ENCODE measurements at regions of chr21 and their contacts with region 1.

Region 1: GRCh38 chr21:33588485-33589335 is at the start of gene DONSON:
- DNase-seq: peak; percentile 93
- ATAC-seq: peak; percentile 92
- H3K4me3 Mint-ChIP-seq: peak within 1 kb of the TSS; percentile 91
- H3K27ac Mint-ChIP-seq: peak within 1 kb of the TSS; percentile 87
- H3K4me1 Mint-ChIP-seq: peaks cover 19% of the 10 kb centered on the region
- H3K27me3 Mint-ChIP-seq: no peaks in the 10 kb centered on the region
- total RNA-seq, gene DONSON: 39.5 to 41.8 TPM

Region 2: DNA sequence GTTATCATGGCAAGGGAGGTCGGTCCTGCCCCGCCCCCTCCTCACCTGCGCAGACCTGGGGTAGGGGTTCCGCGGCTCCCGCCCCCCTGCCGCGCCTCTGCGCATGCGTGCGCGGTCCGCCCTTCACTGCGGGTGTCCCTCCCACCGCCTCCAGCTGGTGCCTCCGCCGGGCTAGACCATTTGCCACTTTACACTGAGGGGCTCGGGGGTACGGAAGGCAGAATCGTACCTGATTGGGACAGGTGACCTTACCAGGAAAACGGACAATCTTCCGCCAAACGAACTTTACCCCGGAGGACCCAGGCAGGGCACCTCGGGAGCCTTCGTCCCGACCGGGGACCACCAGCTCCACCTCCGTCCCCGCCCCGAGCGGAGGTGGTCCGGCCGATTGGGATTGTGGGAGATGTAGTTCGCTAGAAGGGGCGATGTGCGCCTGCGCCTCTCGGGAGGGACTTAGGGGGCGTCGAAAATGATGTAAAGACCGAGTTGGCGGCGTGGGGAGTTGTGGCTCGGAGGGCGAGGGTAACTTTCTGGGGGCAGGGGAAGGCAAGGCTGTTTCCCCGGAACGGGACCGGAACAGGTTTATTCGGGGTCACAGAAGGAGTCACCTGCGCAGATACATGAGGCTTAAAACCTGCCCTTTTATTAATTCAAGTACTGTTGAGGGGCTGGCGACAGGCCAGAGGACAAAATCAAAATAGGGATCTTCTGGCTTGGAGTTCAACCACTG is 97.2 kb before region 1 on chr21 and contains the start of gene DNAJC28:
- CTCF ChIA-PET with region 1: interaction called, 4 read pairs
- POLR2A ChIA-PET with region 1: no interaction called
- intact Hi-C with region 1: loop called in 1 of 2 experiments (anchors 1 kb)
- DNase-seq: peak; percentile 95
- ATAC-seq: peak; percentile 99
- H3K4me3 Mint-ChIP-seq: peak within 1 kb of the TSS; percentile 87
- H3K27ac Mint-ChIP-seq: peak within 1 kb of the TSS; percentile 91
- H3K4me1 Mint-ChIP-seq: peaks cover 9% of the 10 kb centered on the region
- H3K27me3 Mint-ChIP-seq: no peaks in the 10 kb centered on the region
- total RNA-seq, gene DNAJC28: 0.37 to 0.43 TPM

Region 3: DNA sequence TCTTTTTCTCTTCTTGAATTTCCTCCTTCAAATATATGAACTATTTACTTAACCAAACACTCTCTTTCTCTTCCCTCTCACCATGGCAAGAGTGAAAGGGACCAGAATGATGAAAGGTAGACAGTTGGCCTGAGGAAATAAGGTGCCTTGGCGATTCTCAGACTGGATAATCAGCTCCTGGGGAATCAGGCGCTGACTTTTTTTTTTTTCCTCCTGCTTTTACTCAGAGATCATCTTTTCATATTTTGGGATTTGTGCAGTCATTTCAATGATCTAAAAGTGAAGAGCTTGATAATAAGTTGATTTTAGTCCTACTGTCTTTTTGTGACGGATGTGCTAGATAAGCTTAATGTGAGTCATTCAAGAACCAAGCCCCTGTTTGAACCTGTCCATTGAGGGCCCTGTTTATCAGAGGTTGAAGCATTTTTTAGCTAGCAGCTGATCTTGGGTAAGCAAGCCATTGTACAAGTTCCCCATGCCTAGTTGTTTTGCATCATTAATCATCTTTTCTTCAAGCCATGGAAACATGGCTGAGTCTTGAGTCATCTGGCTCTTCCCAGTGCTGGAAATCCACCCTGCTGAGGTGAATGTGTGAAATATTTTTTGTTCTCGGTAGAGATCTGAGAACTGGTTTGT is 94.4 kb after region 1 on chr21:
- CTCF ChIA-PET with region 1: no interaction called
- POLR2A ChIA-PET with region 1: no interaction called
- intact Hi-C with region 1: no loop called
- DNase-seq: no peak
- ATAC-seq: no peak
- H3K4me3 Mint-ChIP-seq: no peak overlapping the region
- H3K27ac Mint-ChIP-seq: no peak overlapping the region
- H3K4me1 Mint-ChIP-seq: peaks cover 3% of the 10 kb centered on the region
- H3K27me3 Mint-ChIP-seq: peaks cover 6% of the 10 kb centered on the region